GM23248 (cell line): ENCODE measurements at regions of chr19 and their contacts with region 1.

Region 1: DNA sequence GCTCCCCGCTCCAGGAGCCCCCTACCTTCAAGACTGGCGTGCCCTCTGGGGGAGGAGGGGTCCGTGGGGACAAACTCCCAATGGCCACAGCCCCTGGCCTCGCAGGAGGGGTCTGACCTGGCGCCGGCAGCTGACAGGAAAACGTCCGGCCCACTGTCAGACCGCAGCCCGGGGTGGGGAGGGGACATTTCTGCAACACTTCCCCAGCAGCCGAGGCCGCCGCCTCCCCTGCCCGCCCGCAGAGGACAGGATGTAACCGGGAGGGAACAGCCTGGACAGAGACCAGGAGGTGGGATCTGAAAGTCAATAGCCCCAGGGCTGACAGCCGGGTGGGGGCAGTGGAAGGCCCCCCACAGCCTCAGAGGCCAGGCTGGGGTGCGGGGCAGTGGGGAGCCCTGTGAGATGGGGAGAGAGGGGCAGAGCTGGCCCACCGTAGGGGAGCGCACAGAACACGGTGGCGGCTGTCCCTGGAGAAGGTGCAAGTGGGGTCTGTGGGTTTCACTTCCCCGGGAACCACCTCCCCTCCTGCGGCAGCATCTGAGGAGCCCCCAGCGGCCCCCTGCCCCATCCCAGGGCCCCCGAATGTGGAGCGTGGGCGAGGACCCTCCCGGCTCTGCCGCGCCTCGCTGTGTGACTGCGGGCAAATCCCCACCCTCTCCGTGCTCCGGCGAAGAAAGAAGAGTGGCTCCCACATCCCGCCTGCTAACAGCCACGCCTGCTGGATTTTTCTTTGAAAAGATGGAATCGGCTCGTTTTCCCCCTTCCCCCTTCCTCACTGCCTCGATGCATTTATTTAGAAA is at the start of gene PEAK3:
- DNase-seq: peak; percentile 45
- H3K4me3 ChIP-seq: no peak within 1 kb of the TSS
- H3K27ac ChIP-seq: no peak within 1 kb of the TSS
- H3K4me1 ChIP-seq: no peaks in the 10 kb centered on the region
- H3K27me3 ChIP-seq: no peaks in the 10 kb centered on the region
- total RNA-seq, gene PEAK3: not detected in 2 replicates

Region 2: DNA sequence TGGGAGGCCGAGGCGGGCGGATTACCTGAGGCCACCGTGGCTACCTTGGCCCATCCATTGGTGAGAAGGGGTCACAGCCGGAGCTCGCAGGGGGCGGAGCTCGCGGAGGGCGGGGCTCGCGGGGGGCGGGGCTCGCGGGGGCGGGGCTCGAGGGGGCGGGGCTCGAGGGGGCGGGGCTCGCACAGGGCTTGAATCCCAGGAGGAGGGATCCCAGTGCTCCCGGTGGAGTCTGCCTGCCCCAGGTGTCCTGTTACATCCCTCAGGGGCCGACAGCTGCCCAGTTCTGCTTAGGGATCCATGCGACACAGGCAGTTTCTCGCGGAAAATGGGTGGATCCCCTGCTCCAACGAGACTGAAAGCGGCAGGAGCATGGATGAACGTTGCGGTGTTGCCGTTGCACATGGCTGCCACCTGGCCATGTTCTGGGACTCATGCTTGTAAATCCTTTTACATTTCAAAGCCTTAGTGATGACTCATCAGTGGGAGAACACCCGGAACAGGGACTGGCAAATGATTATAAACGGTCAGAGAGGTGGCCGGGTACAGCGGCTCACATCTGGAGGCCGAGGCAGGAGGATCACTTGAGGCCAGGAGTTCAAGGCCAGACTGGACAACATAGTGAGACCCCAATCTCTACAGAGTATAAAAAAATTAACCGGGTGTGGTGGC is 102.9 kb after region 1 on chr19:
- in situ Hi-C with region 1: loop called (anchors 10 kb)
- DNase-seq: peak; percentile 87
- H3K4me3 ChIP-seq: peak overlapping the region; percentile 57
- H3K27ac ChIP-seq: no peak overlapping the region
- H3K4me1 ChIP-seq: peaks cover 10% of the 10 kb centered on the region
- H3K27me3 ChIP-seq: no peaks in the 10 kb centered on the region

Region 3: GRCh38 chr19:2427429-2428320 is 145.4 kb after region 1 on chr19 and contains the start of gene TIMM13:
- in situ Hi-C with region 1: no loop called
- DNase-seq: peak; percentile 99
- H3K4me3 ChIP-seq: peak within 1 kb of the TSS; percentile 89
- H3K27ac ChIP-seq: peak within 1 kb of the TSS; percentile 92
- H3K4me1 ChIP-seq: peaks cover 17% of the 10 kb centered on the region
- H3K27me3 ChIP-seq: no peaks in the 10 kb centered on the region
- total RNA-seq, gene TIMM13: 56.4 and 57.6 TPM in 2 replicates